Activated CD4-positive, alpha-beta T cell treated with anti-CD3 and anti-CD28 coated beads, Interleukin-2, amount 10 ng/mL, durations not matched to agents 24 days and 14 days (primary cell): ENCODE measurements at regions of chr20 and their contacts with region 1.

Region 1: DNA sequence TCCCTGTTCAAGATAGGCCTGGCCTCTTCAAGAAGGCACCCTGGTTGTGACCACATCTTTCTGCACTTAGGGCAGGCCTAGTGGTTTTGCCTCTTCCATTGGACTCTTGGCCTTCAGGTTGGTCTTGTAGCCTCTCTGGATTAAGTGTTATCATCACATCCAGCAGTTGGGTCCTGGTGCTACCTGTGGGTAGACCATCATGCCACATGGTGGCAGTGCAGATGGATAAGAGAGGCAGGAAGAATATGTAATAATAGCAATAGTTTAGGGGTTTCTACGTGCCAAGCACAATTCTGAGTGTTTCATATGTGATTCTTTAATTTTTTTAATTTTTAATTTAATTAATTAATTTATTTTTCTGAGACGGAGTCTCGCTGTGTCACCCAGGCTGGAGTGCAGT is 28.5 kb upstream of the SNRPB2 start:
- DNase-seq: peak; percentile 80
- H3K4me3 Mint-ChIP-seq: no peak overlapping the region
- H3K27ac Mint-ChIP-seq: no peak overlapping the region
- H3K4me1 Mint-ChIP-seq: no peaks in the 10 kb centered on the region
- H3K27me3 Mint-ChIP-seq: peaks cover 10% of the 10 kb centered on the region

Region 2: GRCh38 chr20:16761305-16761829 is 60.1 kb after region 1 on chr20:
- intact Hi-C with region 1: loop called (anchors 1 kb)
- DNase-seq: peak; percentile 84
- H3K4me3 Mint-ChIP-seq: no peak overlapping the region
- H3K27ac Mint-ChIP-seq: no peak overlapping the region
- H3K4me1 Mint-ChIP-seq: no peaks in the 10 kb centered on the region
- H3K27me3 Mint-ChIP-seq: peaks cover 15% of the 10 kb centered on the region